BJ (cell line): ENCODE measurements at regions of chr7 and their contacts with region 1.

Region 1: GRCh38 chr7:82481499-82482097 is 38.0 kb upstream of the CACNA2D1 start:
- DNase-seq: no peak
- H3K4me3 ChIP-seq: no peak overlapping the region
- H3K27me3 ChIP-seq: no peaks in the 10 kb centered on the region
- CTCF ChIP-seq: peak; percentile 71

Region 2: GRCh38 chr7:82229164-82229563 is 252.4 kb before region 1 on chr7:
- CTCF ChIA-PET with region 1: interaction called, 11 read pairs
- POLR2A ChIA-PET with region 1: no interaction called
- DNase-seq: no peak
- H3K4me3 ChIP-seq: no peak overlapping the region
- H3K27me3 ChIP-seq: no peaks in the 10 kb centered on the region
- CTCF ChIP-seq: no peak

Region 3: GRCh38 chr7:82494420-82494819 is 12.8 kb after region 1 on chr7:
- CTCF ChIA-PET with region 1: interaction called, 11 read pairs
- POLR2A ChIA-PET with region 1: no interaction called
- DNase-seq: no peak
- H3K4me3 ChIP-seq: no peak overlapping the region
- H3K27me3 ChIP-seq: peaks cover 2% of the 10 kb centered on the region; the same call in 1 of the 2 replicates
- CTCF ChIP-seq: no peak

Region 4: GRCh38 chr7:82506702-82507101 is 25.1 kb after region 1 on chr7:
- CTCF ChIA-PET with region 1: interaction called, 14 read pairs
- POLR2A ChIA-PET with region 1: no interaction called
- DNase-seq: no peak
- H3K4me3 ChIP-seq: no peak overlapping the region
- H3K27me3 ChIP-seq: no peaks in the 10 kb centered on the region; the same call in none of the 2 replicates
- CTCF ChIP-seq: no peak